WTC11 (cell line): ENCODE measurements at regions of chr17 and their contacts with region 1.

Region 1: GRCh38 chr17:74790161-74791054 is 14.3 kb upstream of the NAT9 start:
- DNase-seq: no peak
- ATAC-seq: no peak
- H3K4me3 Mint-ChIP-seq: no peak overlapping the region
- H3K27ac Mint-ChIP-seq: peak overlapping the region; percentile 80; the same call in 1 of the 2 replicates
- H3K4me1 Mint-ChIP-seq: peaks cover 6% of the 10 kb centered on the region
- H3K27me3 Mint-ChIP-seq: no peaks in the 10 kb centered on the region
- CTCF ChIP-seq: no peak

Region 2: DNA sequence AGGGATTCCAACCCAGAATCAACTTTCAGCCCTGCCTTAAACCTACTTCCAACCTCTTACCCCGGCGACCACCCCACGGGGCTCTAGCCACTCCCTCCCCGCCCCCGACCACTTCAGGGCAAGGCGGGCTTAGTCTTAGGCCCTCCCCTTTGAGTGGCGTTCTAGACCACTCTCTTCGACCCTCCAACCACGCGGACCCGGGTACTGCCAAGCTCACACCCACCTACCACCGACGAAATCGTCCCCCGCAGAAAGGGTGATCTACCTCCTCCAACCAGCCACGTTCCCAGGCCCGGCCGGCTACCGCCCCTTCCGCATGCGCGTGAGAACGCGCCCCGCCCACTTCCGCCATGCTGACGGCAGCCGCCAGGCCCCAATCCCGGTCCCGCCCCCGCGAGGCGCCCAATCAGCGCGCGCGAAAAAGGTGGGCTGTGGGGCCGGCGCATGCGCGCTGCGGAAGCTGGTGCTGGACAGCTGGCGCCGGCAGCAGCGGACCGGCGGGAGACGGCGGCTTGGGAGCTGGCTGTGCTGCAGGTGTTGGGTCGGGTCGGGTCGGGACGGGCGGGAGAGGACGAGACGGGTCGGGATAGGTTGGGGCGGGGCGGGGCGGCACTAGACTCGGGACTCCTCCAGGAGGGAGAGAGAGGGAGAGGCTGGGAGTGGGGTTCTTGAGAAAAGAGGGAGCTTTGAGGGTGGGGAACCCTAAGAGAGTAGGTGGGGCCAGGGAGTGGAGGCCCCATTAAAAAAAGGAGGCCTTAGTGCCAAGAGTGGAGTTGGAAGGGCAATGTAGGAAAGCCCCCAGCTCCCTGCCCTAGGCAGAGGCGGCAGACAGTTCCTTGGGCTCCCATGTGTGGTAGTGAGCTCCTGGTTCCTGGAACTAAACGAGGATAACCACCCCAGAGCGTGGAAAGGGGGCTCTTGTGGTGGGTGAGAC is 14.1 kb before region 1 on chr17 and contains the start of gene NAT9:
- CTCF ChIA-PET with region 1: interaction called, 17 read pairs
- POLR2A ChIA-PET with region 1: interaction called, 3 read pairs
- DNase-seq: peak; percentile 99
- ATAC-seq: peak; percentile 96
- H3K4me3 Mint-ChIP-seq: peak within 1 kb of the TSS; percentile 91
- H3K27ac Mint-ChIP-seq: peak within 1 kb of the TSS; percentile 97
- H3K4me1 Mint-ChIP-seq: peaks cover 15% of the 10 kb centered on the region
- H3K27me3 Mint-ChIP-seq: no peaks in the 10 kb centered on the region
- CTCF ChIP-seq: no peak
- total RNA-seq, gene NAT9: 66.0 to 71.2 TPM (median 67.1 TPM) in 3 replicates